ENCODE measurements at regions of chr6 and their contacts with region 1.

Region 1: GRCh38 chr6:12233693-12234571 is 56.2 kb upstream of the EDN1 start:
- DNase-seq: no peak
- H3K4me3 ChIP-seq: no peak overlapping the region
- H3K27ac ChIP-seq: peak overlapping the region in 3 of 4 donors; percentile 43 to 60 (median 54)
- H3K4me1 ChIP-seq: peaks cover 0 to 17% (median 11%) of the 10 kb centered on the region in 4 donors
- H3K27me3 ChIP-seq: no peaks in the 10 kb centered on the region
- CTCF ChIP-seq: peak; percentile 61 to 86 (median 68)
- EP300 ChIP-seq: no peak
- POLR2A ChIP-seq: no peak

Region 2: GRCh38 chr6:11585426-11586016 is 648.4 kb before region 1 on chr6:
- intact Hi-C with region 1: loop called (anchors 5 kb)
- DNase-seq: no peak
- H3K4me3 ChIP-seq: no peak overlapping the region
- H3K27ac ChIP-seq: peak overlapping the region in 1 of 4 donors; percentile 37
- H3K4me1 ChIP-seq: peaks cover 0 to 24% (median 17%) of the 10 kb centered on the region in 4 donors
- H3K27me3 ChIP-seq: no peaks in the 10 kb centered on the region
- CTCF ChIP-seq: peak in 3 of 4 experiments; percentile 42 to 47 (median 45)
- EP300 ChIP-seq: no peak
- POLR2A ChIP-seq: no peak

Region 3: DNA sequence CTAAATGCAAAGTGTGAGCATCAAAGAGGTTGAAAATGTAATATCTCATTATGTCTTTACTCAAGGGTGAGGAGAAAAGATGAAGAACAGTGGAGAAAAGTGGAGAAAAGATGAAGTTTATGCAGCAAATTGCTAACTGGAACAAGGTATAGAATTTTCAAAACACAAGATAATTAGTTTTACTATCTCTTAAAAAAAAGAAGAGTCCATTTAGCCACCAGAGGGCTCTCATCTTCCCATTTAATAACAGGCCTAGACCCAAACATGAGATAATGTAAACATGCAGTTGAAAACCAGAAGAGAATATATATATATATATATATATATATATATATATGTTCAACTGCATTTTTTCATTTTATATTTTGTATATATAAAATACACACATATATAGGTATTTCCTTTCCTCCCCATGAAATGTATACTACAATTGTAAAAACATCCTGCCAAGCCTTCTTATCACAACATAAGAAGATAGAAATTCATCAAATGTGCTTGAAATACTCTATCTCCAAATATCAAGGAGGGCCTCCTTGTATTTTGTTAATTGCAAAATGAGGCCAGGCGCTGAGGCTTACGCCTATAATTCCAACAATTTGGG is 533.7 kb before region 1 on chr6:
- intact Hi-C with region 1: loop called (anchors 5 kb)
- DNase-seq: no peak
- H3K4me3 ChIP-seq: no peak overlapping the region
- H3K27ac ChIP-seq: no peak overlapping the region
- H3K4me1 ChIP-seq: peaks cover 0 to 4% (median 0%) of the 10 kb centered on the region in 4 donors
- H3K27me3 ChIP-seq: no peaks in the 10 kb centered on the region
- CTCF ChIP-seq: peak in 3 of 4 experiments; percentile 19 to 56 (median 44)
- EP300 ChIP-seq: no peak
- POLR2A ChIP-seq: no peak

Region 4: DNA sequence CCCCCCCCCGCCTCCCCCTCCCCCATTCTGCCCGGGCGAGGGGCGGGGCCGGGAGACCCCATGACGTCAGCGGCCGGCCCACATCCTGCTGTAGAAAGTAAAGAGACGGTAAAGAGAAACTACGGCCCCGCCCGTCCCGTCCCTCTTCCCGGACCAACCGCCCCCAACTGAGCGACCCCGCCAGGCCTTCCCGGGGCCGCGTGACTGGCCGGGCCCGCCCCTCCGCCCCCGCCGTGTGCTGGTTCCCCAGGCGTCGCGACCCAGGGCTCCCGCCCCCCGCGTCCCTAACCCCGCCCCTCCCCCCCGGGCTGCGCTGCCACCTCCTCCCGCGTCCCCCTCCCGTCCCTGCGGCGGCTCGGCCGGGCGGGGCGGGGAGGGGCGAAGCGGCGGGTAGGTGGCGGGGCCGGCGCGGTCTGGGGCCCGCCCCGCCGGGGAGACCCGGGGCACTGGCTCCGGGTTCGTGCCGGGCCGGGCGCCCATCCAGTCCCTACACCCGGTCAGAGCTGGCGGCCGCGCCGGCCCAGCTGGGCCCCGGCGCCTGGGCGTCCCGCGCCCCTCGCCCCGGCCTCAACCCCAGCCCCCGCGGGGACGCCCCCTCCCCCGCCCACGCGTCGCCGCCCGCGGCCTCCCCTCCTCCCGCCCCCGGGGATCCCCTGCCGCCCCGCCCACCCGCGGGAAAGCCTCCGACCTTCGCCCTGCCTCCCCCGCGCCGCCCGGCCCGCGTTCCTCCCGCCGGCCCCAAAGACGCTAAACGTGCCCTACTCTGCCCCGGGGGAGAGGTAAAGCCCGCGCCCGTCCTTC is 222.5 kb before region 1 on chr6:
- intact Hi-C with region 1: loop called (anchors 10 kb)
- DNase-seq: peak; percentile 99
- H3K4me3 ChIP-seq: peak overlapping the region; percentile 47 to 93 (median 81)
- H3K27ac ChIP-seq: peak overlapping the region; percentile 93 to 99 (median 98)
- H3K4me1 ChIP-seq: peaks cover 0 to 35% (median 31%) of the 10 kb centered on the region in 4 donors
- H3K27me3 ChIP-seq: no peaks in the 10 kb centered on the region
- CTCF ChIP-seq: no peak
- EP300 ChIP-seq: peak in 3 of 4 donors; percentile 14 to 56 (median 52)
- POLR2A ChIP-seq: no peak

Region 5: DNA sequence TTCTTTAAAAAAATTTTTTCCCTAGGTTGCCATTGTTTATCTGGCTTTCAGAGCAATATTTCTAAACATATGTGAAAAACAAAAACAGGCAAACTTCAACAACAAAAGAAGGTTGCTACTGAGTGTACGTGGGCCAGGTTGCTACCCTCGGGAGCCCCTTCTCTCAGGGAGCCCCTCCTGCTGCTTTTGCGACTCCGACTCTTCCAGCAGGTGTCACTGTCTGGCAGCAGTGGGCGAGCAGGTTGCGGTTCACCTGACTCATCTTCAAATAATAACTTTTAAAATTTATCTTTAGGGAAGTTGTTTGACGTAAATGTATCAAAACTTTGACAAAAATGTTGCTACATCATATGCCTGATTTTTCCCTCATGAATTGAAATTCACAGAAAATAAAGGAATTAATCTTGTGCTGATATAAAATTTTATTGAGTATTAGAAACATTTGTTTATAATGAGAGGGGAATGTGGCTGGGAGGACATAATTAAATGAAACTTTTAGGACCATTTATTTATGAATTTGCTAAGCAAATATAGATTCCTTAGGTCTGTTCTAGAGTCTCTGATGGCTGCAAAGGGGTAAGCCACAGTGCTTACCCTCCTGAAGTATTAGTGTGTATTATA is 83.0 kb before region 1 on chr6:
- intact Hi-C with region 1: loop called (anchors 5 kb)
- DNase-seq: no peak
- H3K4me3 ChIP-seq: no peak overlapping the region
- H3K27ac ChIP-seq: no peak overlapping the region
- H3K4me1 ChIP-seq: peaks cover 0 to 19% (median 5%) of the 10 kb centered on the region in 4 donors
- H3K27me3 ChIP-seq: no peaks in the 10 kb centered on the region
- CTCF ChIP-seq: peak in 3 of 4 experiments; percentile 25 to 41 (median 40)
- EP300 ChIP-seq: no peak
- POLR2A ChIP-seq: no peak